Activated naive CD8-positive, alpha-beta T cell treated with anti-CD3 and anti-CD28 coated beads, Interleukin-2, amount 10 ng/mL, durations not matched to agents 7 days and 5 days (primary cell): ENCODE measurements at regions of chr17 and their contacts with region 1.

Region 1: DNA sequence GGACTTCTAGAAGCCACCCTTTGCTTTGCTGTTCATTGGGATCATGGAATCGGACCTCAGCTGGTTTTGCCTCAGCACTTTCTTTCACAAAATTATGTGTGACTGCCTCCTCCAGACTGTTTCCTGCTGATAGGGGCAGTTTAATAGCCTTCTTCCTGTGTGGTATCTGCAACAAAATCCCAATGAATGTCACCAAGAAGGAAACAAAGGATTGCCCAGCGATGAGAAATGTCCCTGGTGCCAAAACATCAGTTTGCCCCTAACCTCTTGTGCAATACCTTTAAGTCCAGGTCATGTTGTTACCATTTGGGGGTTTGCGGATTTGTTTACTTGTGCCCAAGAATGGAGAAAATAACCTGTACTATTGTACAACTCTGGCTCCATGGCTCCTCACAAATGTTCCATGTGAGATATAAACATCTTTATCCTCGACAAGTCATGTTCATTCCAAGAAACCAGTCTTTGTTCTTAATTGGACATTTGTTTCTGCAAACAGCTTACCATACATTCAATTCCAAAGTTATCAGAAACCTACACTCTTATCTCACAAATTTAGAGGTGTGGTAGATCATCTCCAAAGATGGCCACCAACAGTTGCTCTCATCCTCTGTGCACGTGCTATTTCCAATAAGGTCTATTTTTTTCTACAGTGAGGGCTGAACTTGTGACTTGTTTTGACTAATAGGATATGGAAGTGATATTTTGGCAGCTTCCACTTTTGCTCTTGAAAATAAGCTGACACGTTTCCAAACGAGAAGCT is 14.8 kb downstream of the TAC4 start:
- DNase-seq: no peak
- ATAC-seq: no peak
- H3K4me3 Mint-ChIP-seq: no peak overlapping the region
- H3K27ac Mint-ChIP-seq: no peak overlapping the region
- H3K4me1 Mint-ChIP-seq: no peaks in the 10 kb centered on the region
- H3K27me3 Mint-ChIP-seq: no peaks in the 10 kb centered on the region

Region 2: DNA sequence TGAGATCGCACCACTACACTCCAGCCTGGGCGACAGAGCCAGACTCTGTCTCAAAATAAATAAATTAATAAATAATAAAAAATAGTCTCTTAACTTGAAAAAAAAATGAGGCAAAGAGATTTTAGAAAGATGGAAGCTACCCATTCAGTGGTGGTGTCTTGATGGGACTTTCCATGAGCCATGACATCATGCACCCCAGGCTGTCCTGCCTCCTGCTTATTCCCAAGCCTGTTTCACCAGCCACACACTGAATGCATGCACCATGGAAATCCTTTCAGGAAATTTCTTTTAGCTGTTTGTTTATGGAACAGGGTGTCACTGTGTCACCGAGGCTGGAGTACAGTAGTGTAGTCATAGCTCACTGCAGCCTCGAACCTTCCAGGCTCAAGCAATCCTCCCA is 170.9 kb after region 1 on chr17:
- POLR2A ChIA-PET with region 1: interaction called, 10 read pairs
- DNase-seq: no peak
- ATAC-seq: no peak
- H3K4me3 Mint-ChIP-seq: no peak overlapping the region
- H3K27ac Mint-ChIP-seq: no peak overlapping the region
- H3K4me1 Mint-ChIP-seq: no peaks in the 10 kb centered on the region
- H3K27me3 Mint-ChIP-seq: peaks cover 62% of the 10 kb centered on the region